MCF 10A (cell line): ENCODE measurements at regions of chr5 and their contacts with region 1.

Region 1: DNA sequence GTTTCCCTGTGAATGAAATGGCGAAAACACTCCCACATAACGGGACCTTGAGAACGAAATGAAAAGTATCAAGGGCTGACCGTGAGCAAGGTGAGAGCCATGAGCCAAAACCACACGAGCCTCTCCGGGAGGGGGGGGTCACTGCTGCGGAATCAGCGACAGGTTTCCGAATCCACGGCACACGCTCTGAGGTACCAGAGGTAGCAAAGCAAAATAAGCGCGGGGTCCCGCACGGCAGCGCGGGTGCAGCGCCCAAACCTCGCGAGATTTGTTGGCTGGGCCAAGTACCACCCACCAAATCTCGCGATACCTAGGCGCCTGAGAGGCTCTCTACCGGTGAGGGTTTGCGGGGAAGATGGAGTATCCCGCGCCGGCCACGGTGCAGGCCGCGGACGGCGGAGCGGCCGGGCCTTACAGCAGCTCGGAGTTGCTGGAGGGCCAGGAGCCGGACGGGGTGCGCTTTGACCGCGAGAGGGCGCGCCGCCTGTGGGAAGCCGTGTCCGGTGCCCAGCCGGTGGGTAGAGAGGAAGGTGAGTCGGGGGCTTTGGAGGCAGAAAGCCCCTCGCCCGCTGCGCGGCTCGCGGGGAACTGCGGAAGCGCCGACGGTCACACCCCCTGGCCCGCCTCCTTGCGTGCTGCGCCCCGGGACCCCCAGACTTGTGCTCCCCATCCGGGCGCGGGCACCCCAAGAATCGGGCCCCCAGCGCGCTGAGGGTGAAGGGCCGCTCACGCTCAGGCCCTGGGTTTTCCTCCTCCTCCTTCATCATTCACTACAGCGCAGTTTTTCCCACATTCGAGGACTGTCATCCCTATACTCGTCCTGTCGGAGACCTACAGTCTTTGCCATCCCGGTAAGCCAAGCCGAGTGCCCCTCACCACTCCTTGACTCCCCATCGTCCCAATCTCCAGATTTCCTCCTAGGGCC is at the start of gene ZNF346:
- DNase-seq: peak; percentile 98
- H3K4me3 Mint-ChIP-seq: peak within 1 kb of the TSS; percentile 92
- H3K27ac Mint-ChIP-seq: peak within 1 kb of the TSS; percentile 98
- H3K4me1 Mint-ChIP-seq: peaks cover 29% of the 10 kb centered on the region
- H3K27me3 Mint-ChIP-seq: no peaks in the 10 kb centered on the region
- CTCF ChIP-seq: peak; percentile 46
- total RNA-seq, gene ZNF346: 32.5 and 36.6 TPM in 2 replicates

Region 2: DNA sequence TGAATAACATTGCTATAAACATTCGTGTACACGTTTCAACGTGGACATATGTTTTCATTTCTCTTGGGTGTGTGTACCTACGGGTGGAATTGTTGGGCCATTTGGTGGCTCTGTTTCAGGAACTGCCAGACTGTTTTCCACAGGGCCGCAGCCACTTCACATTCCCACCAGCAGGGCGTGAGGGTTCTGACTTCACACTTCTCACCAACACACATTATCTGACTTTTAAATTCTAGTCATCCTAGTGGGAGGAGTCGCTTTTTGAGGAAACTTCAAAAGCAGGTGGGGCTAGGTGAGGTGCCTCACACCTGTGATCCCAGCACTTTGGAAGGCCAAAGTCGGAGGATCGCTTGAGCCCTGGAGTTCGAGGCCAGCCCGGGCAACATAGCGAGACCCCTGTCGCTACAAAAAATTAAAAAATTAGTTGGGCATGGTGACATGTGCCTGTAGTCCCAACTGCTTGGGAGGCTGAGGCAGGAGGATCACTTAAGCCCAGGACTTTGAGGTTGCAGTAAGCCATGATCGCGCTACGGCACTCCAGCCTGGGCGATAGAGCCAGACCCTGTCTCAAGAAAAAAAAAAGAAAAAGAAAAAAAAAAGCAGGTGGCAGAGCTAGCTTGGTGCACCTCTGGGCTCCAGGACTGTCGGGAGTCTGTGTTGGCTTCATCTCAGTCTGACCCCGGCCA is 346.8 kb before region 1 on chr5:
- CTCF ChIA-PET with region 1: no interaction called
- POLR2A ChIA-PET with region 1: no interaction called
- intact Hi-C with region 1: no loop called
- DNase-seq: peak; percentile 42
- H3K4me3 Mint-ChIP-seq: no peak overlapping the region
- H3K27ac Mint-ChIP-seq: no peak overlapping the region
- H3K4me1 Mint-ChIP-seq: no peaks in the 10 kb centered on the region
- H3K27me3 Mint-ChIP-seq: peaks cover 5% of the 10 kb centered on the region
- CTCF ChIP-seq: peak; percentile 47

Region 3: GRCh38 chr5:176817841-176818377 is 204.7 kb before region 1 on chr5:
- CTCF ChIA-PET with region 1: no interaction called
- POLR2A ChIA-PET with region 1: no interaction called
- intact Hi-C with region 1: no loop called
- DNase-seq: no peak
- H3K4me3 Mint-ChIP-seq: peak overlapping the region; percentile 35
- H3K27ac Mint-ChIP-seq: no peak overlapping the region
- H3K4me1 Mint-ChIP-seq: peaks cover 12% of the 10 kb centered on the region
- H3K27me3 Mint-ChIP-seq: peaks cover 10% of the 10 kb centered on the region
- CTCF ChIP-seq: peak; percentile 24

Region 4: GRCh38 chr5:176994460-176995121 is 28.1 kb before region 1 on chr5:
- CTCF ChIA-PET with region 1: interaction called, 10 read pairs
- POLR2A ChIA-PET with region 1: interaction called, 5 read pairs
- intact Hi-C with region 1: no loop called
- DNase-seq: peak; percentile 75
- H3K4me3 Mint-ChIP-seq: no peak overlapping the region
- H3K27ac Mint-ChIP-seq: peak overlapping the region; percentile 59
- H3K4me1 Mint-ChIP-seq: peaks cover 40% of the 10 kb centered on the region
- H3K27me3 Mint-ChIP-seq: no peaks in the 10 kb centered on the region
- CTCF ChIP-seq: no peak

Region 5: GRCh38 chr5:177094224-177095087 is 71.8 kb after region 1 on chr5:
- CTCF ChIA-PET with region 1: no interaction called
- POLR2A ChIA-PET with region 1: no interaction called
- intact Hi-C with region 1: no loop called
- DNase-seq: peak; percentile 85
- H3K4me3 Mint-ChIP-seq: no peak overlapping the region
- H3K27ac Mint-ChIP-seq: no peak overlapping the region
- H3K4me1 Mint-ChIP-seq: peaks cover 11% of the 10 kb centered on the region
- H3K27me3 Mint-ChIP-seq: peaks cover 3% of the 10 kb centered on the region
- CTCF ChIP-seq: no peak